CD8-positive, alpha-beta T cell (primary cell): ENCODE measurements at regions of chr1 and their contacts with region 1.

Region 1: GRCh38 chr1:110034451-110035235 is at the start of gene STRIP1:
- DNase-seq: peak; percentile 83 to 97 (median 90)
- ATAC-seq: peak; percentile 94
- H3K4me3 ChIP-seq: peak within 1 kb of the TSS; percentile 77 to 89
- H3K4me3 Mint-ChIP-seq: peak within 1 kb of the TSS; percentile 98
- H3K27ac ChIP-seq: peak within 1 kb of the TSS; percentile 74 to 84
- H3K27ac Mint-ChIP-seq: peak within 1 kb of the TSS; percentile 96
- H3K4me1 ChIP-seq: peaks cover 36% of the 10 kb centered on the region
- H3K4me1 Mint-ChIP-seq: peaks cover 53% of the 10 kb centered on the region
- H3K27me3 ChIP-seq: no peaks in the 10 kb centered on the region
- H3K27me3 Mint-ChIP-seq: no peaks in the 10 kb centered on the region
- CTCF ChIP-seq: no peak
- total RNA-seq, gene STRIP1: 94.6 to 109 TPM

Region 2: DNA sequence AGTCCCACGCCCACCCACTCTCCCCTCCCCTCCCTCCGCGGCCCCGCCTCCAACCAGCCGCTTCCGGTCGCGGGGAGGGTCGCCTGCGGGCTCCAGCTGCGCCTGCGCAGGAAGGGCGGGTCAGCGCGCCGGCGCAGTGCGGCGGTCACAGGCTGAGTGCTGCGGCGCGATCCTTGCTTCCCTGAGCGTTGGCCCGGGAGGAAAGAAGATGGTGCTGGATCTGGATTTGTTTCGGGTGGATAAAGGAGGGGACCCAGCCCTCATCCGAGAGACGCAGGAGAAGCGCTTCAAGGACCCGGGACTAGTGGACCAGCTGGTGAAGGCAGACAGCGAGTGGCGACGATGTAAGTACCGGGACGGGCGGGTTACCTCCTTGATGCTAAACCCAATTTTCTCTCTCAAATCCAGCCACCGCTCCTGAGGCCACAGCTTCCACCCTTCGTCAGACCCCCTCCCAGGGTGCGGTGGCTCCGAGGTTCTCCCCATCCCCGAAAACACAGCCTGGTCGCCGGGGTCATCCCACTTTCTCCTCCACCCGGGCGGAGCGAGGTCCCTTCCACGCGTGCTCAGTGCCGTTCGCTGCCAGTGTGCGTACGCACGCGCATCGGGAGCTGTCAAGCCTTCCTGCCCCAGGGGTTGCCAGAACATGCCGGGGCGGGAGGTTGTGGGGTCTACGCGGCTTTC is 820.7 kb before region 1 on chr1 and contains the start of gene SARS1:
- CTCF ChIA-PET with region 1: no interaction called
- POLR2A ChIA-PET with region 1: no interaction called
- intact Hi-C with region 1: loop called in 1 of 2 experiments (anchors 10 kb)
- DNase-seq: peak; percentile 67 to 94 (median 85)
- ATAC-seq: peak; percentile 86
- H3K4me3 ChIP-seq: peak within 1 kb of the TSS; percentile 96 to 100
- H3K4me3 Mint-ChIP-seq: peak within 1 kb of the TSS; percentile 100
- H3K27ac ChIP-seq: peak within 1 kb of the TSS; percentile 79
- H3K27ac Mint-ChIP-seq: peak within 1 kb of the TSS; percentile 95
- H3K4me1 ChIP-seq: peaks cover 27% of the 10 kb centered on the region
- H3K4me1 Mint-ChIP-seq: peaks cover 44% of the 10 kb centered on the region
- H3K27me3 ChIP-seq: no peaks in the 10 kb centered on the region
- H3K27me3 Mint-ChIP-seq: peaks cover 2% of the 10 kb centered on the region
- CTCF ChIP-seq: no peak
- total RNA-seq, gene SARS1: 113 to 118 TPM

Region 3: DNA sequence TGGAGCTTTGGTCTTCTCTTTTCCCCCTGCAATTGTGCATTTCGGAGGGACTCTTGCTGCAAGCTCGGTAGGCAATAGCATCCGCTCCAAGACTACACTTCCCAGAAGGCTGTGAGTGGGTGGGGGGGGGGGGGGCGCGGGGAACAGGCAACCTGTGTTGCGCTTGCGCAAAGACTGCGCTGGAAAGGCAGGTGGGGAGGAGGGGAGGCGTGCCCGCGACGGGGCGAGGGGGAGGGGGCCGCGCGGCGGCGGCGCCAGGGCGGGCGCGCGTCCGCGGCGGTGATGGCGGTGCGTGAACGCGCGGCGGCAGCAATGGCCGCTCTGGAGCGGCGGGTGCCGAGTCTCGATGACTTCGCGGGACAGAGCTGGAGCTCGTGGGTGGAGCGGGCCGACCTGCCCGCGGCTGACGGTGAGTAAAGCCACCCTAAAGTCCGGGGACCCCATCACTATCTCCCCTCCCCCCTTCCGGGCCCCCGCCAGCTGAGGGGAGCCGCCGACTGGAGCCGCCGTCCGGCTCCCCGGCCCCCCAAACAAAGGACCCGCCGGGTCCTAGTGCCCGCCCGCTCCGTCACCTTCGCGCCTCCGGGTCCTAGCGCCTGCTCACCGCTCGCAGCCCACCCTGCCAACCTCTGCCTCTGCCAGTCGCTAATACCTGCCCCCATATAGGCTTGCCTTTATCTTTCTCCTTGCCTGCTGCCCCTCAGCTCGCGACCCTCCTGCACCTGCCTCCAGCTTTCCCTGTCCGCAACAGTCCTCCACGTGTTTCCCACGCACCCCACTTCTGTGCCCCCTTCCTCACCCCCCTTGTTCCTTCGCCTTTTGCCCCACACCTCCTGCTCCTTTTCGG is 550.7 kb before region 1 on chr1 and contains the start of gene ATXN7L2:
- CTCF ChIA-PET with region 1: no interaction called
- POLR2A ChIA-PET with region 1: no interaction called
- intact Hi-C with region 1: loop called (anchors 1 to 5 kb)
- DNase-seq: peak; percentile 87 to 97 (median 92)
- ATAC-seq: peak; percentile 81
- H3K4me3 ChIP-seq: peak within 1 kb of the TSS; percentile 78 to 90
- H3K4me3 Mint-ChIP-seq: peak within 1 kb of the TSS; percentile 94
- H3K27ac ChIP-seq: peak within 1 kb of the TSS; percentile 78 to 93
- H3K27ac Mint-ChIP-seq: peak within 1 kb of the TSS; percentile 91
- H3K4me1 ChIP-seq: peaks cover 22% of the 10 kb centered on the region
- H3K4me1 Mint-ChIP-seq: peaks cover 35% of the 10 kb centered on the region
- H3K27me3 ChIP-seq: no peaks in the 10 kb centered on the region
- H3K27me3 Mint-ChIP-seq: peaks cover 2% of the 10 kb centered on the region
- CTCF ChIP-seq: no peak
- total RNA-seq, gene ATXN7L2: 16.8 to 19.4 TPM

Region 4: DNA sequence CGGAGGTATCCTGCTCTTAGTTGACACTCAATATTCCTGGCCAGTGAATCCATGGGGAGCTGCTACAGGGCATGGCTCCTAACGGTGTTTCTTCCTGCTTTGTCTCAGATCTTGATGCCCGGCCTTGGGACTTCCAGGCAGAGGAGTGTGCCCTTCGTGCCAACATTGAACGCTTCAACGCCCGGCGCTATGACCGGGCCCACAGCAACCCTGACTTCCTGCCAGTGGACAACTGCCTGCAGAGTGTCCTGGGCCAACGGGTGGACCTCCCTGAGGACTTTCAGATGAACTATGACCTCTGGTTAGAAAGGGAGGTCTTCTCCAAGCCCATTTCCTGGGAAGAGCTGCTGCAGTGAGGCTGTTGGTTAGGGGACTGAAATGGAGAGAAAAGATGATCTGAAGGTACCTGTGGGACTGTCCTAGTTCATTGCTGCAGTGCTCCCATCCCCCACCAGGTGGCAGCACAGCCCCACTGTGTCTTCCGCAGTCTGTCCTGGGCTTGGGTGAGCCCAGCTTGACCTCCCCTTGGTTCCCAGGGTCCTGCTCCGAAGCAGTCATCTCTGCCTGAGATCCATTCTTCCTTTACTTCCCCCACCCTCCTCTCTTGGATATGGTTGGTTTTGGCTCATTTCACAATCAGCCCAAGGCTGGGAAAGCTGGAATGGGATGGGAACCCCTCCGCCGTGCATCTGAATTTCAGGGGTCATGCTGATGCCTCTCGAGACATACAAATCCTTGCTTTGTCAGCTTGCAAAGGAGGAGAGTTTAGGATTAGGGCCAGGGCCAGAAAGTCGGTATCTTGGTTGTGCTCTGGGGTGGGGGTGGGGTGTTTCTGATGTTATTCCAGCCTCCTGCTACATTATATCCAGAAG is 19.1 kb after region 1 on chr1:
- CTCF ChIA-PET with region 1: interaction called, 46 read pairs
- POLR2A ChIA-PET with region 1: interaction called, 4 read pairs
- intact Hi-C with region 1: no loop called
- DNase-seq: peak; percentile 29 to 79 (median 70)
- ATAC-seq: peak; percentile 92
- H3K4me3 ChIP-seq: no peak overlapping the region
- H3K4me3 Mint-ChIP-seq: no peak overlapping the region
- H3K27ac ChIP-seq: no peak overlapping the region
- H3K27ac Mint-ChIP-seq: no peak overlapping the region
- H3K4me1 ChIP-seq: no peaks in the 10 kb centered on the region
- H3K4me1 Mint-ChIP-seq: no peaks in the 10 kb centered on the region
- H3K27me3 ChIP-seq: no peaks in the 10 kb centered on the region
- H3K27me3 Mint-ChIP-seq: no peaks in the 10 kb centered on the region
- CTCF ChIP-seq: peak; percentile 85

Region 5: GRCh38 chr1:110216844-110217444 is 182.3 kb after region 1 on chr1:
- CTCF ChIA-PET with region 1: no interaction called
- POLR2A ChIA-PET with region 1: no interaction called
- intact Hi-C with region 1: no loop called
- DNase-seq: no peak
- ATAC-seq: no peak
- H3K4me3 ChIP-seq: no peak overlapping the region
- H3K4me3 Mint-ChIP-seq: no peak overlapping the region
- H3K27ac ChIP-seq: no peak overlapping the region
- H3K27ac Mint-ChIP-seq: no peak overlapping the region
- H3K4me1 ChIP-seq: peaks cover 12% of the 10 kb centered on the region
- H3K4me1 Mint-ChIP-seq: peaks cover 24% of the 10 kb centered on the region
- H3K27me3 ChIP-seq: no peaks in the 10 kb centered on the region
- H3K27me3 Mint-ChIP-seq: no peaks in the 10 kb centered on the region
- CTCF ChIP-seq: no peak

Region 6: GRCh38 chr1:110407260-110408210 is 372.9 kb after region 1 on chr1 and contains the start of gene LAMTOR5:
- CTCF ChIA-PET with region 1: no interaction called
- POLR2A ChIA-PET with region 1: interaction called, 5 read pairs
- intact Hi-C with region 1: loop called (anchors 5 to 10 kb)
- DNase-seq: peak; percentile 83 to 95 (median 89)
- ATAC-seq: peak; percentile 93
- H3K4me3 ChIP-seq: peak within 1 kb of the TSS; percentile 92 to 99
- H3K4me3 Mint-ChIP-seq: peak within 1 kb of the TSS; percentile 99
- H3K27ac ChIP-seq: peak within 1 kb of the TSS; percentile 91 to 92
- H3K27ac Mint-ChIP-seq: peak within 1 kb of the TSS; percentile 99
- H3K4me1 ChIP-seq: peaks cover 23% of the 10 kb centered on the region
- H3K4me1 Mint-ChIP-seq: peaks cover 29% of the 10 kb centered on the region
- H3K27me3 ChIP-seq: no peaks in the 10 kb centered on the region
- H3K27me3 Mint-ChIP-seq: no peaks in the 10 kb centered on the region
- CTCF ChIP-seq: no peak
- total RNA-seq, gene LAMTOR5: 106 to 109 TPM

Region 7: DNA sequence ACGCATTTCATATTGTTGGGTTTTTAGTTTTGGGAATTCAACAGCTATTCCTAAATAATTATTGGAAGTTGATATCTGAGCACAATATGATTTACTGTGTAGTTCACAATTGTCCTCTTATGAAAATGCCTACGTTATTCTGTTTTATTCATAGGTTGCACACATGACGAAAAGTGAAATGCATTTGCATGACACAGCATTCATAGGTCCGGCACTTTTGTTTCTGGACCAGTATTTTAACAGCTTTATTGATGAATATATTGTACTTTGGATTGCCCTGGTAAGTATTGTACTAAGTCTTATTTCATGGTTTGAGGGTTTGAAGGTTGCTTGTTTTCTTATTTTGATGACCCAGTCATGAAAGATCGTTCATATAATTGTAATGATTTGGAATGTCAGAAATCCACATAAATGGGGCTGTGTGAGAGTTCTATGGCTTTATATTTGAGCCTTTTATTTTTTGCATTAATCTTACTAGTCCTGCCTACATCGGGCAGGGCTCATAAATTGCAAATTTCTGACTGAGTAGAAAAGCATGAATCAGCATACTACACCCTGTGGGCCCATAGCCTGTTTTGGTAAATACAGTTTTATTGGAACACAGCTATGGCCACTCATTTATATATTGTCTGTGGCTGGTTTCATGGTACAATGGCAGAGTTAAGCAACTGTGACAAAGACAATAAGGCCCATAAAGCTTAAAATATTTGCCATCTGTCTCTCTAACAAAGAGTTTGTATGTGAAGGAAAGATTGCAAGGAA is 1148.8 kb after region 1 on chr1:
- CTCF ChIA-PET with region 1: no interaction called
- POLR2A ChIA-PET with region 1: no interaction called
- intact Hi-C with region 1: no loop called
- DNase-seq: no peak
- ATAC-seq: no peak
- H3K4me3 ChIP-seq: no peak overlapping the region
- H3K4me3 Mint-ChIP-seq: no peak overlapping the region
- H3K27ac ChIP-seq: peak overlapping the region in 1 of 2 experiments; percentile 38
- H3K27ac Mint-ChIP-seq: peak overlapping the region; percentile 64
- H3K4me1 ChIP-seq: peaks cover 63% of the 10 kb centered on the region
- H3K4me1 Mint-ChIP-seq: peaks cover 89% of the 10 kb centered on the region
- H3K27me3 ChIP-seq: no peaks in the 10 kb centered on the region
- H3K27me3 Mint-ChIP-seq: no peaks in the 10 kb centered on the region
- CTCF ChIP-seq: no peak

Region 8: GRCh38 chr1:111448918-111449702 is 1414.5 kb after region 1 on chr1 and contains the starts of genes ATP5PB and WDR77:
- CTCF ChIA-PET with region 1: no interaction called
- POLR2A ChIA-PET with region 1: no interaction called
- intact Hi-C with region 1: loop called (anchors 5 to 10 kb)
- DNase-seq: peak; percentile 75 to 98 (median 89)
- ATAC-seq: peak; percentile 94
- H3K4me3 ChIP-seq: peak within 1 kb of the TSS; percentile 77 to 86
- H3K4me3 Mint-ChIP-seq: peak within 1 kb of the TSS; percentile 99
- H3K27ac ChIP-seq: peak within 1 kb of the TSS; percentile 75 to 83
- H3K27ac Mint-ChIP-seq: peak within 1 kb of the TSS; percentile 98
- H3K4me1 ChIP-seq: peaks cover 58% of the 10 kb centered on the region
- H3K4me1 Mint-ChIP-seq: peaks cover 84% of the 10 kb centered on the region
- H3K27me3 ChIP-seq: no peaks in the 10 kb centered on the region
- H3K27me3 Mint-ChIP-seq: no peaks in the 10 kb centered on the region
- CTCF ChIP-seq: no peak
- total RNA-seq, gene ATP5PB: 59.9 to 64.6 TPM
- total RNA-seq, gene WDR77: 9.5 to 11.4 TPM